ENCODE measurements at regions of chr6 and their contacts with region 1.

Region 1: DNA sequence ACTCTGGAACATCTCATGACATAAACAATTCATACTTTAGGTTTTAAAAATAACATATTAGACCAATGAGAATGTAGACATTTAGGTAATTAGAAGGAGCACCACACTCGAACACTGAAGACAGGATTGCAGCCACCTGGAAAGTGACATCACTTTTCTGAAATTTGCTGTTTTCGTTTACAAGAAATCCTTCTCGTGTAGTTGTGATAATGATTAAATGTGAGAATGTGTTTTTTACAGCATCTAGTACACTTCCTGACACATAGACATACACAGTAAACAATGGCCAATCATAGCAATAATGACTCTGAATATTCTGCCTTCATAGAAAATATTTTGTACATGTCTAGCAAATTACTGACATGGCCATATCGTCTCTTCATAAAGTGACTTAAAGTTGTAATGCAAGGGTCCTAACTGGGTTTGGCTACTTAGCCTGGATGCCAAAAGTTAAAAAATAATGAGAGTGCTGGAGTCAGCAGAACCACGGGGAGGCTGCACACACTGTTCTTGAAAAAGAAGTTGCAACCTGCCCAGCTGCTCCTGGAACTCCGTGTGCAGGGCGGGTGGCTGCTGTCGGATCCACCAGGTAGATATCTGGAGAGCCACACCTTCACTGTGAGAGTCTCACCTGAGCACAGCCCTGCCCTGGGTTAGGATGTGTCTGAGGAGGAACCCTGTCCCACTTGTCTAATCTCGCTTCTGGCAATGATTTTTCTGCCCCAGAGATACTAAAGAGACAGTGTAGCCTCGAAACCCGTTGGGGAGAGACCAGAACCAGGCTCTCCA is 212.9 kb downstream of the QKI start:
- DNase-seq: peak; percentile 46

Region 2: GRCh38 chr6:163585932-163586437 is 41.5 kb before region 1 on chr6:
- intact Hi-C with region 1: no loop called
- DNase-seq: peak; percentile 87

Region 3: GRCh38 chr6:163667372-163668060 is 40.0 kb after region 1 on chr6:
- intact Hi-C with region 1: loop called in 1 of 2 experiments (anchors 1 kb)
- DNase-seq: no peak